ENCODE measurements at regions of chr6 and their contacts with region 1.

Region 1: DNA sequence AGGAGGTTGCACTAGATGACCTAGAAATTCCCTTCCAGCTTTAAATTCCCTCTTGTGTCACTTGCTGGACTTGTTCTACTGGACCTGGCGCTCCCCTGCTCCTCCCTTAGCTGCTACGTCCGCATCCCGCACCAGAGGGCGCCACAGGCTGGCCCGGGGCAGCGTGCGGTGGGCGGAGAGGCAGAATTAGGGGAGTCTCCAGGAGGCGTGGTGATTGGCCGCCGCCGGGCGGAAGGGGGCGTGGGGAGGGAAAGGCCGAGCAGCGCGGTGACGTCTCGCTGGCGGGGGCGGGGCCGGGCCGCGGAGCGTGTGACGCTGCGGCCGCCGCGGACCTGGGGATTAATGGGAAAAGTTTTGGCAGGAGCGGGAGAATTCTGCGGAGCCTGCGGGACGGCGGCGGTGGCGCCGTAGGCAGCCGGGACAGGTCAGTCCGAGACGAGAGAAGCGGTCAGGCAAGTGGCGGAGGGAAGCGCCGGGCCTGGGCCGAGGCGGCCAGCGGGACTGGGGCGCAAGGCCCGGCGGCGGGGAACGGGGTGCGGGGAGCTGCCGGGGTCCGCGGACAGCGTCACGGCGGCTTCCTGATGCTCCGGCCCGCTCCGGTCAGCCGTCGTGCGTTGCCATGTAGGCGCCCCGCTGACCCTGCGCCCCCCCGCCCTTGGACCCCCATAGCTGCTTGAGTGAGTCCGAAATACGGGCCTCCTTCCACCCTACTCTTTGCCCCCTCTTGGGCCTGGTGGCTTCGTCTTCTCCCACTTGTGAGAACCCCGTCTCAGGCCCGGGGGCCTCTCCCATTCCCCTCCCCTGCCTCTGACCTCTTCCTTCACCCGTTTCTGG is at the start of gene PPARD:
- DNase-seq: peak; percentile 87
- H3K4me3 ChIP-seq: peak within 1 kb of the TSS; percentile 71
- H3K27ac ChIP-seq: peak within 1 kb of the TSS; percentile 11
- H3K27me3 ChIP-seq: peaks cover 3% of the 10 kb centered on the region
- CTCF ChIP-seq: peak; percentile 99
- polyA plus RNA-seq, gene PPARD: 26.9 and 32.9 TPM in 2 replicates

Region 2: DNA sequence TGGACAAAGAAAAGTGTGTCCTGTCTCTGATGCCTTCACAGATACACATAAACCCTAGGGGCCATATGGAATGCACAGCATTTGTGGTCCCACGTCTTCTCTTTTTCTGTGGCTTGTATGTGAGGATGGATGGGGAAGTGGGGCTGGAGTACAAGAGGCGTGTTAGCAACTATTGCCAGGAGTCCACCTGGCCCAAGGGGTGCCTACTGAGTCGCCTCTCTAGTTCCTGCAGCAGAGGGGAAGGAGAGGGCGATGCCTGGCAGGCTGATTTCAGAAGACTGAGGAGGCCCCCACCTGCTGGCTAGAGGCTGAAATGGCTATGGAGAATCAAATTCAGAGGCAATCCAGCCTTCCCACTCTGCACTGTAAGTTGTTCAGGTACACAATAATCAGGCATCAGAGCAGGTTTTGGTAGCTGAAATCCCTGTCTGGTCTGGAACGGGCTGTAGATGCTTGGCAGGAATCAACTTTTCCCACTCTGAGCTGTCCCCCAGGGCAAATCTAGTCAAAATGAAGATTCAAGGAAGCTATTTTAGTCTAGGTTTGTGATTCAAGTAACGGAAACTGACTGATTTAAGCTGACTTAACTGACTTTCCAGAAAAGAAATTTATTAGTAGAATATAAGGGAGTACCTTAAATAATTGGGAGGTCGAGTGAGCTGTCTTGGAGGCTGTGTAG is 15.0 kb before region 1 on chr6:
- CTCF ChIA-PET with region 1: interaction called, 13 read pairs
- POLR2A ChIA-PET with region 1: no interaction called
- DNase-seq: peak; percentile 15
- H3K4me3 ChIP-seq: no peak overlapping the region
- H3K27ac ChIP-seq: no peak overlapping the region
- H3K27me3 ChIP-seq: peaks cover 5% of the 10 kb centered on the region
- CTCF ChIP-seq: peak; percentile 82

Region 3: DNA sequence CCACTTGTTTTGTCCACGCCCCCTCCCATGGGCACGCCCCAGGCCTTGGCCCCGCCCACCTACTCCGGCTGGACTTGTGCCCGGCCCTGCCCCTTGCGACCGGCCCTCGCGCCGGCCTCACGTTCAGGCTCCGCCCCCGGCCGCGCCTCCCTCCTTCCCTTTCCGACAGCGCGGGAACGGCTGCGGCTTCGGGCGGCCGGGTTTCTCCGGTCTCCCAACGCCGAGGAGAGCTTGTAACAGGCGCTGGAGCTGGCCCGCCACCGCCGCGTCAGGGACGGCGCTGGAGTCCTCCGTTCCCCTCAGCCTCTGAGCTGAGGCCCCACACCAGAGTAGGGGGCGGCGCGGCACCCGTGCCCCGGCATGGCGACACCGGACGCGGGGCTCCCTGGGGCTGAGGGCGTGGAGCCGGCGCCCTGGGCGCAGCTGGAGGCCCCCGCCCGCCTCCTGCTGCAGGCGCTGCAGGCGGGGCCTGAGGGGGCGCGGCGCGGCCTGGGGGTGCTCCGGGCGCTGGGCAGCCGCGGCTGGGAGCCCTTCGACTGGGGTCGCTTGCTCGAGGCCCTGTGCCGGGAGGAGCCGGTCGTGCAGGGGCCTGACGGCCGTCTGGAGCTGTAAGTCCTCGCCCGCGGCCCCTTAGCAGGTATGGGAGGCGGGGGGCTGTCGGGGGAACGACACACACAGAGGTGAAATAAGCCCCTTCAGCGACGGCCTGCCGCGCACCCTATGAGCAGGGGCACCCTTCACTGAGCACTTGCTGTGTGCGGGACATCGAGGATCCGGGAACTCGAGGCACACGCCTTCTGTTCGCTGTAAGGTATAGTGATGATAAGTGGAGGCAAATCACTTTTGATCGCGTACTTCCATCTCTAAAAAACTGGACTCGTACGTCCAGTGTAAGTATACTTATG is 110.0 kb after region 1 on chr6 and contains the start of gene FANCE:
- CTCF ChIA-PET with region 1: interaction called, 201 read pairs
- POLR2A ChIA-PET with region 1: interaction called, 8 read pairs
- DNase-seq: peak; percentile 74
- H3K4me3 ChIP-seq: peak within 1 kb of the TSS; percentile 75
- H3K27ac ChIP-seq: no peak within 1 kb of the TSS
- H3K27me3 ChIP-seq: no peaks in the 10 kb centered on the region
- CTCF ChIP-seq: no peak
- polyA plus RNA-seq, gene FANCE: 7.0 and 7.1 TPM in 2 replicates

Region 4: GRCh38 chr6:35468181-35468979 is 125.9 kb after region 1 on chr6 and contains the start of gene RPL10A:
- CTCF ChIA-PET with region 1: interaction called, 43 read pairs
- POLR2A ChIA-PET with region 1: interaction called, 5 read pairs
- DNase-seq: peak; percentile 92
- H3K4me3 ChIP-seq: peak within 1 kb of the TSS; percentile 93
- H3K27ac ChIP-seq: peak within 1 kb of the TSS; percentile 86
- H3K27me3 ChIP-seq: no peaks in the 10 kb centered on the region
- CTCF ChIP-seq: peak; percentile 94
- polyA plus RNA-seq, gene RPL10A: 2,636 and 2,921 TPM in 2 replicates